ENCODE measurements at regions of chr17 and their contacts with region 1.

Region 1: GRCh38 chr17:42744806-42745617 is at the start of gene EZH1:
- DNase-seq: peak; percentile 88 to 95 (median 94)
- H3K4me3 ChIP-seq: peak within 1 kb of the TSS; percentile 51 to 58
- H3K4me3 Mint-ChIP-seq: peak within 1 kb of the TSS; percentile 91 to 97 (median 96)
- H3K27ac ChIP-seq: peak within 1 kb of the TSS; percentile 66
- H3K27ac Mint-ChIP-seq: peak within 1 kb of the TSS; percentile 81 to 96 (median 92)
- H3K4me1 ChIP-seq: peaks cover 25% of the 10 kb centered on the region
- H3K4me1 Mint-ChIP-seq: peaks cover 7 to 38% (median 20%) of the 10 kb centered on the region in 4 donors
- H3K27me3 ChIP-seq: no peaks in the 10 kb centered on the region
- H3K27me3 Mint-ChIP-seq: peaks cover 5 to 7% of the 10 kb centered on the region in 2 donors
- total RNA-seq, gene EZH1: 184 to 192 TPM

Region 2: GRCh38 chr17:42677008-42677857 is 67.8 kb before region 1 on chr17:
- CTCF ChIA-PET with region 1: no interaction called
- POLR2A ChIA-PET with region 1: no interaction called
- intact Hi-C with region 1: loop called (anchors 2 kb)
- DNase-seq: peak; percentile 91 to 98 (median 93)
- H3K4me3 ChIP-seq: peak overlapping the region; percentile 63 to 75
- H3K4me3 Mint-ChIP-seq: peak overlapping the region; percentile 86 to 97 (median 90)
- H3K27ac ChIP-seq: peak overlapping the region; percentile 42
- H3K27ac Mint-ChIP-seq: peak overlapping the region; percentile 79 to 94 (median 89)
- H3K4me1 ChIP-seq: peaks cover 74% of the 10 kb centered on the region
- H3K4me1 Mint-ChIP-seq: peaks cover 32 to 70% (median 46%) of the 10 kb centered on the region in 4 donors
- H3K27me3 ChIP-seq: peaks cover 36% of the 10 kb centered on the region
- H3K27me3 Mint-ChIP-seq: peaks cover 23 to 27% of the 10 kb centered on the region in 2 donors

Region 3: GRCh38 chr17:42798383-42799380 is 53.7 kb after region 1 on chr17 and contains the starts of genes CNTD1 and COA3:
- CTCF ChIA-PET with region 1: no interaction called
- POLR2A ChIA-PET with region 1: no interaction called
- intact Hi-C with region 1: loop called (anchors 1 kb)
- DNase-seq: peak; percentile 58 to 70 (median 68)
- H3K4me3 ChIP-seq: peak within 1 kb of the TSS; percentile 26 to 92
- H3K4me3 Mint-ChIP-seq: peak within 1 kb of the TSS; percentile 93 to 98 (median 95)
- H3K27ac ChIP-seq: peak within 1 kb of the TSS; percentile 47
- H3K27ac Mint-ChIP-seq: peak within 1 kb of the TSS in 6 of 7 donors; percentile 9 to 94 (median 92)
- H3K4me1 ChIP-seq: peaks cover 16% of the 10 kb centered on the region
- H3K4me1 Mint-ChIP-seq: peaks cover 12 to 24% (median 17%) of the 10 kb centered on the region in 4 donors
- H3K27me3 ChIP-seq: no peaks in the 10 kb centered on the region
- H3K27me3 Mint-ChIP-seq: no peaks in the 10 kb centered on the region
- total RNA-seq, gene CNTD1: not detected
- total RNA-seq, gene COA3: 27.7 to 30.1 TPM

Region 4: DNA sequence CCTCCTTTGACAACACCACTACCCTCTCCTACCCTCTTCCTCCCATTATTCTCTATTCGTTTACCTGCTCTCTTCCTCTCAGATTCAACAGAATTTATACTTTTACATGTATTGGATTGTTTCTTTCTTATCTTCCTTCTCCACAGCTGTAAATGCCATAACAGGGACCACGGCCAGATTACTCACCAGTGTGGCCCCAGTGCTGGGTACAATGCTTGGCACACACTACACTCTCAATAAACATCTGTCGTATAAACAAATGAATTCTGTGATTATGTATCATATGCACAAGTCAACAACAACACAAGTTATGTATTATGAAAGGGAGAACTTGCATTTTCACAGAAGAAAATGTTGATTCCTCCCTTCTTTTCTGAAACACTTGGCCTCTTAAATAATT is 199.2 kb after region 1 on chr17:
- CTCF ChIA-PET with region 1: no interaction called
- POLR2A ChIA-PET with region 1: no interaction called
- intact Hi-C with region 1: no loop called
- DNase-seq: no peak
- H3K4me3 ChIP-seq: no peak overlapping the region
- H3K4me3 Mint-ChIP-seq: peak overlapping the region in 1 of 8 donors; percentile 66
- H3K27ac ChIP-seq: no peak overlapping the region
- H3K27ac Mint-ChIP-seq: no peak overlapping the region
- H3K4me1 ChIP-seq: no peaks in the 10 kb centered on the region
- H3K4me1 Mint-ChIP-seq: no peaks in the 10 kb centered on the region
- H3K27me3 ChIP-seq: no peaks in the 10 kb centered on the region
- H3K27me3 Mint-ChIP-seq: no peaks in the 10 kb centered on the region